Cardiac septum (tissue), 1 donor: ENCODE measurements at regions of chr7 and their contacts with region 1.

Region 1: GRCh38 chr7:135281363-135281949 is 47.8 kb downstream of the STRA8 start:
- DNase-seq: no peak

Region 2: GRCh38 chr7:135111379-135111778 is 170.1 kb before region 1 on chr7:
- intact Hi-C with region 1: no loop called
- DNase-seq: no peak

Region 3: DNA sequence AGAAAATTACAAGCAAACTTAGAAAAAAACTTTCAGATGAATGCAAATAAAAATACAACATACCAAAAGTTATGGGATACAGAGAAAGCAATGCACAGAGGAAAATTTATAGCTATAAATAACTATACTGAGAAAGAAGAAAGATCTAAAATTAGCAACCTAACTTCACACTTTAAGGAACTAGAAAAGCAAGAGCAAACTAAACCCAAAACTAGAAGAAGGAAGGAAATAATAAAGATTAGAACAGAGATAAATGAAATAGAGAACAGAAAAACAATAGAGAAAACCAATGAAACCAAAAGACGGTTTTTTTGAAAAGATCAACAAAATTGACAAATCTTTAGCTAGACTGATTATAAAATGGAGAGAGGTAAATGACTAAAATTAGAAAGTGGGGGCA is 57.4 kb before region 1 on chr7:
- intact Hi-C with region 1: no loop called
- DNase-seq: no peak

Region 4: DNA sequence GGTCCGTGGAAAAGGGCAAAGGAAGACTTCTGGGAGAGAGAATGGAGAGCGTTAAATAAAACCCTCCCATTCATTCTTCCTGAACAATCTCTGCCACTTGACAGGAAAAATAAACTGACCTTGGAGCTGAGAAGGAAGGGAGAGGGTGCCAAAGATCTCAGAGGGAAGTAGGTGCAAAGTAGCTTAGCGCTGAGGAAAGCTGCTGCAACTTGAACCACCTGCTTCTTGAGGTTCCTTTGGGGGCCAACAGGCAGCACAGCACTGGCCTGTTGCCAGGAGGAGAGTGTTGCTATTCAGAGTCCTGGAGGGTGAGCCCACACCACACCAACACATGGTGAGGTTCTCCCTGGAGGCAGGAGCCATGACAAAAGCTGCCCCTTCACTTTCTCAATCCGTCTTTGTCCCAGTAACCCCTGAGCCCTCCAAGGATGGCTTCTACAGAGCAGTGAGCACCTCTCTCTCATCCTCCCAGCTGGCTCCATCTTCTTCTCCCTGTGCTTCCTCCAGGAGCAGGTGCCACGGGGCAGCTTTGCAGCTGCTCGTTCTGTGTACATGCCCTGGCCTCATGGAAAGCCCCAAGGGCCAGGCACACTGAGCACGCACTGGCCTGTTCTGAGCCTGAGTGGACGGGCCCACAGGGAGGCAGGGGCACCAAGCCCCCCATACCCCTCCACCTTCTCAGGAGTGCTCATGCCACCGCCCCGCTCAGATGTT is 53.5 kb after region 1 on chr7:
- intact Hi-C with region 1: loop called (anchors 5 kb)
- DNase-seq: no peak

Region 5: DNA sequence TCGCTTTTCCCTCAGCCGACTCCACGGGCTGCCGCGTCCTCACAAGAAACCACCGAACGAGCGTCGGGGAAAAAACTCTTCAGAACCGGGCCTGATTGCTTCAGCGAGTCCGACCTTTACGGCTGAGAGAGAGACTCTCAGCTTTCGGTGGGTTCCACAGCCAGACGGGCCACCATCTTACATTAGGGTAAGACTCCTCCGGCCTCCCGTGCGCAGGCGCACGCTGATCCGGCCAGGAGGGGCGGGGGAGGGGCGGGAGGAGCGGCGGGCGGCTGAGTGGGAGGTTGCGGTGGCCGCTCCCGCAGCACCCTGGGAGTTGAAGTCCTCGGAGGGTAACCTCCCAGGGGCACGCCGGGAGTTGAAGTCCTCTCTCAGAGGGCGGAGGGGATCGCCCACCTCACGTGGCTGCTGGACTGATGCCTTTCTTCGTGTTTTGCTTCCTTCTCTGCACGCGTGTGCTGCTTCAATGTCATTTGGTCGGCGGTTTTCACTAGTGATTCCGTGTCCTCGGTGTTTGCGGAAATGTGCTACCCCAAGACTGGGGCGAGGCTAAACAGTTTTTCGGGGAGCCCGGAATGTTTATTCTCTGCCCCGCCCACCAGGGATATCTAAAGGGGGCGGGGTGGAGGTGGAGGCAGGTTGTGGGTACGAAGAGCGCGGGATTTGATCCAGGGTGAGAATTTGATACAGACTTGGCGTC is 228.6 kb after region 1 on chr7 and contains the start of gene CNOT4:
- intact Hi-C with region 1: loop called (anchors 2 kb)
- DNase-seq: peak; percentile 98
- total RNA-seq, gene CNOT4: 26.5 TPM

Region 6: GRCh38 chr7:135558337-135558767 is 276.9 kb after region 1 on chr7:
- intact Hi-C with region 1: loop called (anchors 1 kb)
- DNase-seq: no peak

Region 7: GRCh38 chr7:135644154-135644553 is 362.7 kb after region 1 on chr7:
- intact Hi-C with region 1: loop called (anchors 5 kb)
- DNase-seq: no peak